CD8-positive, alpha-beta T cell (primary cell): ENCODE measurements at regions of chr18 and their contacts with region 1.

Region 1: DNA sequence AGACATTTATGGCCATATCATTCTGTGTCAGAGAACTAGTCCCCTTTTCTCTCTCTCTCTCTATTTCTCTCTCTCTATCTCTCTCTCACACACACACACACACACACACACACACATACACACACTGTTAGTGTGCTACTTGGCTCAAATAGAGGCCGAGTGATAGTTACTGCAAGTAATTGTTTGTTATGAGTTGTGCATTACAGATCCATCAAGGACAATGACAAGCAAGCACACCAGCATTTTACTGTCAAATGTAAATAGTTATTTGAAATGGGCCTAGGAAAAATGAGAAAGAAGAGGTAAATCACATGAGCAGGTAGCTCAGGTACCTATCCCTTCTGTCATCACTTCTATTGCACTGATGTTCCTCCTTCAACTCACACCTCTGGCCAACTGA is 122.4 kb upstream of the CDH7 start:
- DNase-seq: no peak
- ATAC-seq: no peak
- H3K4me3 ChIP-seq: no peak overlapping the region
- H3K4me3 Mint-ChIP-seq: no peak overlapping the region
- H3K27ac ChIP-seq: no peak overlapping the region
- H3K27ac Mint-ChIP-seq: no peak overlapping the region
- H3K4me1 ChIP-seq: no peaks in the 10 kb centered on the region
- H3K4me1 Mint-ChIP-seq: no peaks in the 10 kb centered on the region
- H3K27me3 ChIP-seq: no peaks in the 10 kb centered on the region
- H3K27me3 Mint-ChIP-seq: no peaks in the 10 kb centered on the region
- CTCF ChIP-seq: no peak

Region 2: DNA sequence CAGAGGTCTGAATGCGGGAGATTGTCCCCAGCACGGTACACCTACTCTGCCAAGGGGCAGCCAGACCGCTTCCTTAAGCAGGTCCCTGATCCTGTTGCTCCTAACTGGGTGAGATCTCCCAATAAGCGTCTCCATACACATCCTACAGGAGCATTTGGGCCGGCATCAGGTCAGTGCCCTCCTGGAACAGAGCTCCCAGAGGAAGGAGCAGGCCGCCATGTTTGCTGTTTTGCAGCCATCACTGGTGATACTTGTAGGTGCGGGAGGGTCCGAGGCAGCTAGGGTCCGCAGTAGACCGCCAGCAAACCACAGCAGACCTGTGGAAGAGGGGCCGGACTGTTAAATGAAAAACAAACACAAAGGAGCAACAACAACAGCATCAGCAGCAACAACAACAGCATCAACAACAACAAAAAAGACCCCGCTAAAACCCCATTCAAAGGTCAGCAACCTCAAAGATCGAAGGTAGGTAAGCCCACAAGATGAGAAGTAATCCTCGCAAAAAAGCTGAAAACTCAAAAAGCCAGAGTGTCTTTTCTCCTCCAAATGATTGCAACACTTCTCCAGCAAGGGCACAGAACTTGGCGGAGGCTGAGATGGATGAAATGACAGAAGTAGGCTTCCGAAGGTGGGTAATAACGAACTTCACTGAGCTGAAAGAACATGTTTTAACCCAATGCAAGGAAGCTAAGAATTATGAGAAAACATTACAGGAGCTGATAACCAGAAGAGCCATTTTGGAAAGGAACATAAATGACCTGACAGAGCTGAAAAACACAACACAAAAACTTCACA is 43.4 kb after region 1 on chr18:
- CTCF ChIA-PET with region 1: no interaction called
- POLR2A ChIA-PET with region 1: no interaction called
- intact Hi-C with region 1: loop called in 1 of 2 experiments (anchors 5 kb)
- DNase-seq: no peak
- ATAC-seq: no peak
- H3K4me3 ChIP-seq: no peak overlapping the region
- H3K4me3 Mint-ChIP-seq: no peak overlapping the region
- H3K27ac ChIP-seq: no peak overlapping the region
- H3K27ac Mint-ChIP-seq: no peak overlapping the region
- H3K4me1 ChIP-seq: no peaks in the 10 kb centered on the region
- H3K4me1 Mint-ChIP-seq: no peaks in the 10 kb centered on the region
- H3K27me3 ChIP-seq: no peaks in the 10 kb centered on the region
- H3K27me3 Mint-ChIP-seq: no peaks in the 10 kb centered on the region
- CTCF ChIP-seq: no peak